ENCODE measurements at regions of chr3 and their contacts with region 1.

Region 1: DNA sequence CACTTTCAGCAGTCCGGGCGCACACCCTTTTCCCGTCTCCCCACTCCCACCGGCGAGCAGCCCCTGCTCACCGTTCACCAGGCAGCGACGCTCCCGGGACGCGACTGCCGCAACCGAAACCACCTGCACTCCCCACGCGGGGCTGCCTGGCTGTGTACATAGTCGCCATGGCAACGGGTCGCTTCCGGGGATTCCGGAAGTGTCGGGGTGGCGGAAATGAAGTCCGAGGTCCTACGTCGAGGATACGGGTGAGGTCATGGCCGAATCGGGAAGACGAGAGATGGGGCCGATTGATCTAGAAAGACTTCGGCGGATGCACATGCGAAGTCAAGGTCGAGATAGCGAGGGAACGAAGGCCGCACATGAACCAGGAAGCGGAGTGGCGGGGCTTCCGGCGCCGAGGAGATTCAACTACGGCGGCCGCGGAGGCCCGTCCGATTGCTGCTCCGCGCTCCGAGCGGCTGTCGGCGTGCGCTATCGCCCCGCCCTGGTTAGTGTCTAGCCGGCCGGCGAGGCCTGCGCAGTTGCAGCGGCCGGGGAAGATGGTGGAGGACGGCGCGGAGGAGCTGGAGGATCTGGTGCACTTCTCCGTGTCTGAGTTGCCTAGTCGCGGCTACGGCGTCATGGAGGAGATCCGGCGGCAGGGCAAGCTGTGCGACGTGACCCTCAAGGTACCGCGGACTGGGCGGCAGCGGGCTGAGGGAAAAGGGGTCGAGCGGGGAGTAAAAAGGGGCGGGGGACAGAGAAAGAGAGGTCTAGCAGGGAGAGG is at the starts of genes KIF9 and KLHL18:
- DNase-seq: peak; percentile 86 to 98 (median 97)
- ATAC-seq: peak; percentile 91
- H3K4me3 ChIP-seq: peak within 1 kb of the TSS; percentile 76
- H3K4me3 Mint-ChIP-seq: peak within 1 kb of the TSS; percentile 89 to 100 (median 98)
- H3K27ac ChIP-seq: peak within 1 kb of the TSS; percentile 93
- H3K27ac Mint-ChIP-seq: peak within 1 kb of the TSS; percentile 98 to 100 (median 99)
- H3K4me1 ChIP-seq: peaks cover 14 to 23% of the 10 kb centered on the region in 2 donors
- H3K4me1 Mint-ChIP-seq: peaks cover 29 to 56% (median 43%) of the 10 kb centered on the region in 7 donors
- H3K27me3 ChIP-seq: no peaks in the 10 kb centered on the region
- H3K27me3 Mint-ChIP-seq: no peaks in the 10 kb centered on the region
- total RNA-seq, gene KIF9: 2.7 to 15.0 (median 4.1) TPM
- total RNA-seq, gene KLHL18: 21.7 to 47.5 (median 24.5) TPM

Region 2: GRCh38 chr3:46845791-46846623 is 436.6 kb before region 1 on chr3:
- CTCF ChIA-PET with region 1: no interaction called
- POLR2A ChIA-PET with region 1: no interaction called
- intact Hi-C with region 1: loop called in 1 of 2 experiments (anchors 2 kb)
- DNase-seq: peak; percentile 69 to 83 (median 78)
- ATAC-seq: peak; percentile 97
- H3K4me3 ChIP-seq: peak overlapping the region; percentile 66
- H3K4me3 Mint-ChIP-seq: peak overlapping the region; percentile 50 to 91 (median 82)
- H3K27ac ChIP-seq: peak overlapping the region; percentile 65
- H3K27ac Mint-ChIP-seq: peak overlapping the region in 6 of 9 donors; percentile 20 to 75 (median 60)
- H3K4me1 ChIP-seq: peaks cover 0 to 11% of the 10 kb centered on the region in 2 donors
- H3K4me1 Mint-ChIP-seq: peaks cover 0 to 14% (median 5%) of the 10 kb centered on the region in 7 donors
- H3K27me3 ChIP-seq: no peaks in the 10 kb centered on the region
- H3K27me3 Mint-ChIP-seq: peaks cover 0 to 36% (median 0%) of the 10 kb centered on the region in 5 donors

Region 3: DNA sequence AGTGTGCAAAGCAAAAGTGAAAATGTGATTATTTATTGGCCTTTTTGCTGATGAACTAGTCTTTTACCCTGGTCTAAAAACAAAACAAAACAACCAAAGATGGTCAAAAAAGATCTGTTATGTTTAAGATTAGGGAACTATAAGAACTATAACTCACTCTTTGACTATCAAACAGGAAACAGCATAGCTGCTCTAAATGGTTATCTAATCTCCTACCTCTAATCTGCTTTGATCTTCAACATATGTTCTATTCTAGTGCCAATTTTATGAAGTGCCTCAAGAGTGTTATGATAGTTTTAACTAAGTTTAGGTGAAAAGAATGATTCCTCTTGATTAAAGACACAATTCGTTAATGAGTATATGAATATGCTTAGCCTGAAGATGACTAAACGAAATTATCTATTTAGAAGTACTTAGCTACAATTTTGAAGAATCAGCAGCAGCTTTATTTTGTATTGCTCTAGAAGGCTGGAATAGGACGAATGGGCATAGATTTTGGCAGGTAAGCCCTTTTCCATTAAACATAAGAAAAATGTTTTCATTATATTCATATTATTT is 164.7 kb before region 1 on chr3:
- CTCF ChIA-PET with region 1: no interaction called
- POLR2A ChIA-PET with region 1: no interaction called
- intact Hi-C with region 1: loop called in 1 of 2 experiments (anchors 5 kb)
- DNase-seq: peak in 3 of 9 donors; percentile 15 to 25 (median 25)
- ATAC-seq: peak; percentile 67
- H3K4me3 ChIP-seq: no peak overlapping the region
- H3K4me3 Mint-ChIP-seq: peak overlapping the region in 9 of 10 donors; percentile 2 to 60 (median 19)
- H3K27ac ChIP-seq: no peak overlapping the region
- H3K27ac Mint-ChIP-seq: peak overlapping the region; percentile 6 to 70 (median 28)
- H3K4me1 ChIP-seq: peaks cover 4 to 13% of the 10 kb centered on the region in 2 donors
- H3K4me1 Mint-ChIP-seq: peaks cover 30 to 61% (median 53%) of the 10 kb centered on the region in 7 donors
- H3K27me3 ChIP-seq: no peaks in the 10 kb centered on the region
- H3K27me3 Mint-ChIP-seq: no peaks in the 10 kb centered on the region

Measured in naive thymus-derived CD4-positive, alpha-beta T cell (primary cell).